ENCODE measurements at regions of chr14 and their contacts with region 1.

Region 1: GRCh38 chr14:24411443-24412389 is 12.9 kb downstream of the NYNRIN start:
- DNase-seq: peak in 1 of 2 experiments; percentile 56
- H3K4me3 ChIP-seq: no peak overlapping the region
- H3K27ac ChIP-seq: no peak overlapping the region
- H3K4me1 ChIP-seq: no peaks in the 10 kb centered on the region
- H3K27me3 ChIP-seq: 0 out of 7 replicates have a peak, but pooled peaks cover 0 to 2% (median 0%) of the 10 kb centered on the region in 4 experiments
- CTCF ChIP-seq: peak; percentile 66 to 89 (median 84)
- EP300 ChIP-seq: no peak
- POLR2A ChIP-seq: no peak
- RAD21 ChIP-seq: peak; percentile 66 to 76

Region 2: DNA sequence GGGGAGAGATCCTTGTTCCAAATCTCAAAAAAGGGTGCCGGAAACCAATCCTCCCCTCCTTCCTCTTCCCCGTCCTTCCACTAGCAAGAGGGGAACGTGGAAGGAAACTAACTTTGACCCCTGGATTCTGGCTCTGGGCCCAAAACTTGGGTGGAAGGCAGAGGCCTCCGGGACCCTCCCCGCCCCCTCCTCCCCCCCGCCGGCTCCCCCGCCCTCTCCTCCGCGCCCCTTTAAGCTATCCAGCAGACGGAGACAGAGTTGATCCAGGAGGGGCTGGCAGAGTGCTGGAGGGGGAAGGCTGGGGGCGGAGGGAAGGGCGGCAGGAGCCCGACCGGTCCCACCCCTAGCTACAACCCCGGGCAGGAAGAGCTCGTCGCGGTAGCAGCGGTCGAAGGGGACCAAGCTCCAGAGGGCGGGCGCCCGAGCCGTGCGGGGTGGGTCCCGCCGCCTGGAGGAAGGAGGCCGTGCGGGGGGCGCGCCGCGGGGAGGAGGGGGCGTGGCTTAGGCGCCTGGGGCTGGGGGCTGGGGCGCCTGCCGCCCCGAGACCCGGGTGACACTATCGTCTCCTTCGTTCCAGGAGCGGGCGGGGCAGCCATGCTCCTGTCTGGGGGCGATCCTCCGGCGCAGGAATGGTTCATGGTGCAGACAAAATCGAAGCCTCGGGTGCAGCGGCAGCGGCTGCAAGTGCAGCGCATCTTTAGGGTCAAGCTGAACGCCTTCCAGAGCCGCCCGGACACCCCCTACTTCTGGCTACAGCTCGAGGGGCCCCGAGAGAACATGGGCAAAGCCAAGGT is 12.9 kb before region 1 on chr14 and contains the start of gene NYNRIN:
- CTCF ChIA-PET with region 1: interaction called, 69 read pairs
- POLR2A ChIA-PET with region 1: interaction called, 5 read pairs
- DNase-seq: peak in 1 of 2 experiments; percentile 81
- H3K4me3 ChIP-seq: peak within 1 kb of the TSS; percentile 68 to 80 (median 78)
- H3K27ac ChIP-seq: no peak within 1 kb of the TSS
- H3K4me1 ChIP-seq: peaks cover 0 to 14% (median 10%) of the 10 kb centered on the region in 4 experiments
- H3K27me3 ChIP-seq: peaks cover 0 to 3% (median 0%) of the 10 kb centered on the region in 4 experiments; a peak in 1 of 7 replicates
- CTCF ChIP-seq: no peak
- EP300 ChIP-seq: no peak
- POLR2A ChIP-seq: no peak
- RAD21 ChIP-seq: no peak
- total RNA-seq, gene NYNRIN: 18.3 and 19.6 TPM in 2 replicates

Region 3: DNA sequence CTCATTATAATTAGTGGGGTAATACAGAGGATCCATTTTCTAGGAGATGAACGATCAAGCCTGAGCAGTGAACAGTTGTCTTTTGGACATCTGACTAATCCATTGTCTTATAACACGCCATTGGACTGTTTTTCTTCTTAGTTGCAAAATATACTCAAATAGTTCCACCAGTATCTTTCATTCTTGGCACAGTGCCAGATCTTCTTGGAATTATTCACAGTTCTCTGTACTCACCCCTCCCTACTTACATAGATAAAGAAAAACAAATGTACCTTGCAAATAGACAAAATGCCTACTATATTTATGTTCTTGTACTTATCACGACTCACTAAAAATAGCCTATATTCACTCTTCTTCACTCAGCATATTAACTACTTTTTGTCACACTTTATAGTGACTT is 14.0 kb after region 1 on chr14:
- CTCF ChIA-PET with region 1: interaction called, 101 read pairs
- POLR2A ChIA-PET with region 1: interaction called, 28 read pairs
- DNase-seq: no peak
- H3K4me3 ChIP-seq: no peak overlapping the region
- H3K27ac ChIP-seq: no peak overlapping the region
- H3K4me1 ChIP-seq: peaks cover 0 to 13% (median 9%) of the 10 kb centered on the region in 4 experiments; a peak in 6 of 7 replicates
- H3K27me3 ChIP-seq: peaks cover 0 to 20% (median 1%) of the 10 kb centered on the region in 4 experiments; a peak in 3 of 7 replicates
- CTCF ChIP-seq: no peak
- EP300 ChIP-seq: no peak
- POLR2A ChIP-seq: no peak
- RAD21 ChIP-seq: no peak

Region 4: GRCh38 chr14:24518851-24519250 is 107.1 kb after region 1 on chr14:
- CTCF ChIA-PET with region 1: no interaction called
- POLR2A ChIA-PET with region 1: no interaction called
- DNase-seq: no peak
- H3K4me3 ChIP-seq: no peak overlapping the region
- H3K27ac ChIP-seq: no peak overlapping the region
- H3K4me1 ChIP-seq: no peaks in the 10 kb centered on the region
- H3K27me3 ChIP-seq: 0 out of 7 replicates have a peak, but pooled peaks cover 0 to 2% (median 0%) of the 10 kb centered on the region in 4 experiments
- CTCF ChIP-seq: no peak
- EP300 ChIP-seq: no peak
- POLR2A ChIP-seq: no peak
- RAD21 ChIP-seq: no peak

Region 5: DNA sequence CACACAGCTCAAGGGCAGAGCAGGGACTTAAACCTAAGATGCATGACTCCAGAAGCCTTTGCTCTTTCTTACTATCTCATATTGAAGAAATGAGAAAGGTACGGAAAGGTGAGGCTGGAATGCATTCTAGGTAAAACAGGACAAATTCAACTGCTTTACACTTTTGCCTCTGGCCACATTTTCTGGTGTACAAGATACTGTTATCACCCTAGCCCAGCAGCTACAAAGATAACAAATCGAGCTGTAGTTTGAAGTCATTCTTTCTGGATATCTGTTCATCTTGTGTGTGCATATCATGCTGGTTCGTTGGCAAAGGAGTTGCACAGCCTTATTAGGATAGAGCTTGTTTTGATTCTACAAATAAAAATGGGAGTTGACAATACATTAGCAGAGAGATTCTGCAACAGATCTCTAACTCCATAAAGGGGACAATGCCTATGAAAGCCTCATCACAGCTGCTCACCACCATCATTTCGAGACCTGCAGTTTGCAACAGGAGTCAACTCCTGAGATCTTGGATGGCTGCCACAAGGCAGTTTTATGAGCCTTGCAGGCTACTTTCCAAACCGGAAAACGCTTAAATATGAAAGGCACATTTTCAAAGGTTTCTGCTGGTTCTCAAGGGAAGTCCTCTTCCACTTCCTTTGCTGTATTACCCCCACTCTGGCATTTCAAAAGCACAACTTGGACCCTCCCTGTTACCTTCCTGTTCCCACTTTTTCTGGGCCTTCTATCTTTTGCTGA is 573.3 kb after region 1 on chr14:
- CTCF ChIA-PET with region 1: no interaction called
- POLR2A ChIA-PET with region 1: no interaction called
- DNase-seq: no peak
- H3K4me3 ChIP-seq: no peak overlapping the region
- H3K27ac ChIP-seq: no peak overlapping the region
- H3K4me1 ChIP-seq: peaks cover 0 to 6% (median 0%) of the 10 kb centered on the region in 4 experiments; a peak in 1 of 7 replicates
- H3K27me3 ChIP-seq: no peaks in the 10 kb centered on the region
- CTCF ChIP-seq: no peak
- EP300 ChIP-seq: no peak
- POLR2A ChIP-seq: no peak
- RAD21 ChIP-seq: no peak